H1 (cell line): ENCODE measurements at regions of chr18 and their contacts with region 1.

Region 1: GRCh38 chr18:63511286-63511685 is 30.9 kb upstream of the SERPINB12 start:
- DNase-seq: peak; percentile 44 to 68
- H3K4me3 ChIP-seq: peak overlapping the region in 1 of 4 experiments; percentile 20; a peak in 1 of 8 replicates
- H3K27ac ChIP-seq: no peak overlapping the region
- H3K4me1 ChIP-seq: peaks cover 2 to 18% (median 9%) of the 10 kb centered on the region in 4 experiments; a peak in 4 of 7 replicates
- H3K27me3 ChIP-seq: no peaks in the 10 kb centered on the region
- CTCF ChIP-seq: peak in 2 of 3 experiments; percentile 79 to 83; a peak in 3 of 4 replicates
- EP300 ChIP-seq: no peak
- POLR2A ChIP-seq: no peak
- RAD21 ChIP-seq: peak; percentile 48 to 63

Region 2: DNA sequence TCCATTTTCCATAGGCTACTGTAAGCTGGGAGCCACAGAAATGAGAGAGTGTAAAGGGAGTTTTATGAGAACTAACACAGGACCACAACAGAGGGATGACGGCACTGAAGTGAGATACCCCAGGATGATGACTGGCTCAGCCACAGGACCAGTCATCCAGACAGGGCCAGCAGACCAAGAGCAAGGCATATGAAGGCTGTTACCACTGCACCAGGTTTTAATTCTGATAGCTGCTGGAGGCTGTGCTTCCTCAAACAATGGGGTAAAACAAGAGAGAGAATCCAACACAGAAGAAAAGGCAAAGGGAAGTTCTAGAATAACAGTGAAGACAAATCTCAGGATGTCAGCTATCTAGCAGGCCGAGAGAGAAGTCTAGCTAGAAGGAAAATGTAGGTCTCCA is 286.7 kb before region 1 on chr18:
- CTCF ChIA-PET with region 1: no interaction called
- POLR2A ChIA-PET with region 1: no interaction called
- DNase-seq: no peak
- H3K4me3 ChIP-seq: no peak overlapping the region
- H3K27ac ChIP-seq: no peak overlapping the region
- H3K4me1 ChIP-seq: no peaks in the 10 kb centered on the region
- H3K27me3 ChIP-seq: no peaks in the 10 kb centered on the region
- CTCF ChIP-seq: no peak
- EP300 ChIP-seq: no peak
- POLR2A ChIP-seq: no peak
- RAD21 ChIP-seq: no peak

Region 3: DNA sequence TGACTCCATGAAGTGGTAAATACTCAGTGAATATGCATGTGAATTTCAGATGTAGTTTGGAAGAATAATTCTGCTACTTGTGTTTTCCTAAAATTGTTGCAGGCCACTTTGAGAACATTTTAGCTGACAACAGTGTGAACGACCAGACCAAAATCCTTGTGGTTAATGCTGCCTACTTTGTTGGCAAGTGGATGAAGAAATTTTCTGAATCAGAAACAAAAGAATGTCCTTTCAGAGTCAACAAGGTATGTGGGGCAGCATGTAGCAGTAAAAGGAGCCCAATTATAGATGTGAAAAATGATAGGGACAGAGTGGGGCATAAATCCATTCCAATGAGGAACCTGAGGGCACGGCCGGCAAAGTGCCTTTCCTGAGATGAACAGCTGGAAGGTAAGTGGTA is 18.4 kb before region 1 on chr18:
- CTCF ChIA-PET with region 1: interaction called, 34 read pairs
- POLR2A ChIA-PET with region 1: no interaction called
- DNase-seq: no peak
- H3K4me3 ChIP-seq: no peak overlapping the region
- H3K27ac ChIP-seq: no peak overlapping the region
- H3K4me1 ChIP-seq: no peaks in the 10 kb centered on the region
- H3K27me3 ChIP-seq: peaks cover 0 to 1% (median 0%) of the 10 kb centered on the region in 4 experiments; a peak in 1 of 7 replicates
- CTCF ChIP-seq: no peak
- EP300 ChIP-seq: no peak
- POLR2A ChIP-seq: no peak
- RAD21 ChIP-seq: no peak

Region 4: GRCh38 chr18:63550068-63550467 is 38.8 kb after region 1 on chr18:
- CTCF ChIA-PET with region 1: interaction called, 11 read pairs
- POLR2A ChIA-PET with region 1: no interaction called
- DNase-seq: no peak
- H3K4me3 ChIP-seq: no peak overlapping the region
- H3K27ac ChIP-seq: no peak overlapping the region
- H3K4me1 ChIP-seq: no peaks in the 10 kb centered on the region
- H3K27me3 ChIP-seq: no peaks in the 10 kb centered on the region
- CTCF ChIP-seq: no peak
- EP300 ChIP-seq: no peak
- POLR2A ChIP-seq: no peak
- RAD21 ChIP-seq: no peak

Region 5: DNA sequence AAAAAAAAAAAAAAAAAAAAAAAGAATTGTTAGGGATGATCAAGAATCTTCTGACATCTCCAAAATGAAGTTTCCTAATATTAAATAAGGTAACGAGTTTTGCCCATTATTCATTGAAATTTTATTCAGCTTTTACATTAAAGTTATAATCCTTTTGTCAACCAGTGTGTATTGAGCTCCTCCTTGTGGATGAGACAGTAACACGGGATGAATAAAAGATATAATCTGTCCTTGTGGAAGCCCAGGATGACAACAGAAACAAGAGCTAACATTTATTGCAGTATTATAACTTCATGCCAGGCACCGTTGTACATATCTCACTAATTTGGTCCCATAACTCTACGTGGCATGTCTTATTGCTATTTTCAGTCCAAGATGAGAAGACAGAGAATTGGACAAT is 230.5 kb after region 1 on chr18:
- CTCF ChIA-PET with region 1: interaction called, 109 read pairs
- POLR2A ChIA-PET with region 1: no interaction called
- DNase-seq: no peak
- H3K4me3 ChIP-seq: no peak overlapping the region
- H3K27ac ChIP-seq: no peak overlapping the region
- H3K4me1 ChIP-seq: no peaks in the 10 kb centered on the region; a peak in 1 of 7 replicates
- H3K27me3 ChIP-seq: no peaks in the 10 kb centered on the region
- CTCF ChIP-seq: peak in 2 of 3 experiments; percentile 28 to 45; a peak in 2 of 4 replicates
- EP300 ChIP-seq: no peak
- POLR2A ChIP-seq: no peak
- RAD21 ChIP-seq: peak; percentile 66

Region 6: DNA sequence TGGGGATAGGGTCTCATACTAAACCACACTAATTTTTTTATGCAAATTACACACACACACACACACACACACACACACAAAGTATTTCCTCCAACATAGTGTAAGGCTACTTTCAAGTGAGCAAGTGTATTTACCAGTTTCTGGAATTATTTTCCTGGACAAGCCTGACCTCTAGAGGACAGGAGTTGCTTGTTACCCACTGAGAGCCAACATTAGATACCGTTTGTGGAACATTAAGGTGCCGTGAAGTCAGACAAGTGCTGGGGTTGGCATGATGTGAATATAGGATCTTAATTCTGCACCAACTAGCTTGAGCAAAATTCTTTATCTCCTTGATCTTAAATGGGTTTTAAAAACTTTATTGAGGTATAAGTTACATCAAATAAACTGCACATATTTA is 336.9 kb after region 1 on chr18:
- CTCF ChIA-PET with region 1: interaction called, 73 read pairs
- POLR2A ChIA-PET with region 1: no interaction called
- DNase-seq: no peak
- H3K4me3 ChIP-seq: no peak overlapping the region
- H3K27ac ChIP-seq: no peak overlapping the region
- H3K4me1 ChIP-seq: no peaks in the 10 kb centered on the region
- H3K27me3 ChIP-seq: no peaks in the 10 kb centered on the region
- CTCF ChIP-seq: peak in 2 of 3 experiments; percentile 63 to 70; a peak in 3 of 4 replicates
- EP300 ChIP-seq: no peak
- POLR2A ChIP-seq: no peak
- RAD21 ChIP-seq: peak; percentile 75 to 79